IMR-90 (cell line): ENCODE measurements at regions of chr7 and their contacts with region 1.

Region 1: GRCh38 chr7:124171068-124171467 is 138.2 kb upstream of the TMEM229A start:
- DNase-seq: peak; percentile 62
- ATAC-seq: peak; percentile 77
- H3K4me3 ChIP-seq: no peak overlapping the region
- H3K27ac ChIP-seq: peak overlapping the region; percentile 55; the same call in 1 of the 2 replicates
- H3K4me1 ChIP-seq: peaks cover 2% of the 10 kb centered on the region; the same call in 1 of the 2 replicates
- H3K27me3 ChIP-seq: no peaks in the 10 kb centered on the region
- CTCF ChIP-seq: peak; percentile 79
- POLR2A ChIP-seq: no peak
- RAD21 ChIP-seq: peak; percentile 80

Region 2: DNA sequence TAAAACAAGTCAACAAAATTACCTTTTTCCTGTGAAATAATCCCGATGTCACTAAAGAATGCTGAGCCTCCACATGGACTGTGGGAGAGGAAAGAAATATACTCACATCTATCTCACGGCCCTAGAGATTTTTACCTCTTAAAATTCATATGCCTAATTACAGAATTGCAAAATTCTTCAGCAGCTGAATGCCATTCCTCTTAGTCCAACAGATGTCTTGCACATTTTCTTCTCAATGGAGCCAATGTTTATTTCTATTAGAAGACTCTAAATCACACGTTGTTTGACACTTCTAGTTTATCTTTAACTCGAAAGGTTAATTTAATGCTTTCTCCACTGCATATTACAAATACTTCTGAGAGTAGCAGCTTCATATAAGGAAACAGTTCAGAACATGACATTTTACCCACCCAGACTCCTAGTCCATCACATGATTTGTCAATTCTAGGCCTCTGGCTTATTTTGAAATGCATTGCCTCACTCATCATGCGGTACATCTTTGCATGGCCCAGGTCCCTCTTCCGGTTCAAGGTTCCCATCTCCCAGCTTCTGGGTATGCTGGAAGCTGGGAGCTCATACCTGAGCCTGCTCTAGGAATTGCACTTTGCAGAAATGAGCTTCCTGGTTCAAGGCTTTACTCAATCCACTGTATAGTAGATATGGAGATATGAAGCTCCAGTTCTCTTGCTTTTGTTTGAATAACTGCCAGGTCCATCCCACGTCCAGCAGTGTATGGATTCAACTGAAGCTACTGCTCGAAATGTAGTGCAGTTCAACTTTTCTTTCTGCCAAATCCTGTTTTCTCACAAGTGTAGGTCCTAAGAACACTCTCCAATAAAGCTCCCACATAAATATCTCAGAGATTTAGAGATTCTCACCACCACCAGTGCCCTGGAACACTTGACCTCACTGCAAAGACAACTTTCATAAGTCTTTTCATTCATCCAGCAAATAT is 288.3 kb after region 1 on chr7:
- CTCF ChIA-PET with region 1: interaction called, 3 read pairs
- POLR2A ChIA-PET with region 1: no interaction called
- dilution Hi-C with region 1: no loop called
- in situ Hi-C with region 1: no loop called
- intact Hi-C with region 1: loop called (anchors 2 kb)
- DNase-seq: peak; percentile 87
- ATAC-seq: peak; percentile 76
- H3K4me3 ChIP-seq: no peak overlapping the region
- H3K27ac ChIP-seq: peak overlapping the region; percentile 86
- H3K4me1 ChIP-seq: peaks cover 13% of the 10 kb centered on the region
- H3K27me3 ChIP-seq: no peaks in the 10 kb centered on the region
- CTCF ChIP-seq: no peak
- POLR2A ChIP-seq: no peak
- RAD21 ChIP-seq: no peak

Region 3: GRCh38 chr7:124536156-124536762 is 365.2 kb after region 1 on chr7:
- CTCF ChIA-PET with region 1: no interaction called
- POLR2A ChIA-PET with region 1: no interaction called
- dilution Hi-C with region 1: no loop called
- in situ Hi-C with region 1: no loop called
- intact Hi-C with region 1: loop called (anchors 10 kb)
- DNase-seq: peak; percentile 59
- ATAC-seq: peak; percentile 48
- H3K4me3 ChIP-seq: no peak overlapping the region
- H3K27ac ChIP-seq: 0 out of 2 replicates have a peak overlapping the region, but pooled peaks have one; percentile 41
- H3K4me1 ChIP-seq: peaks cover 7% of the 10 kb centered on the region
- H3K27me3 ChIP-seq: no peaks in the 10 kb centered on the region
- CTCF ChIP-seq: no peak
- POLR2A ChIP-seq: no peak
- RAD21 ChIP-seq: no peak

Region 4: GRCh38 chr7:124784879-124785818 is 614.1 kb after region 1 on chr7:
- CTCF ChIA-PET with region 1: interaction called, 5 read pairs
- POLR2A ChIA-PET with region 1: no interaction called
- dilution Hi-C with region 1: no loop called
- in situ Hi-C with region 1: no loop called
- intact Hi-C with region 1: loop called (anchors 1 kb)
- DNase-seq: peak; percentile 73
- ATAC-seq: peak; percentile 85
- H3K4me3 ChIP-seq: no peak overlapping the region
- H3K27ac ChIP-seq: no peak overlapping the region
- H3K4me1 ChIP-seq: peaks cover 2% of the 10 kb centered on the region; the same call in 1 of the 2 replicates
- H3K27me3 ChIP-seq: no peaks in the 10 kb centered on the region
- CTCF ChIP-seq: peak; percentile 95
- POLR2A ChIP-seq: 0 out of 2 replicates have a peak, but pooled peaks have one; percentile 43
- RAD21 ChIP-seq: peak; percentile 97

Region 5: GRCh38 chr7:124918662-124919061 is 747.6 kb after region 1 on chr7:
- CTCF ChIA-PET with region 1: no interaction called
- POLR2A ChIA-PET with region 1: no interaction called
- dilution Hi-C with region 1: no loop called
- in situ Hi-C with region 1: no loop called
- intact Hi-C with region 1: no loop called
- DNase-seq: peak; percentile 2
- ATAC-seq: no peak
- H3K4me3 ChIP-seq: no peak overlapping the region
- H3K27ac ChIP-seq: no peak overlapping the region
- H3K4me1 ChIP-seq: no peaks in the 10 kb centered on the region
- H3K27me3 ChIP-seq: no peaks in the 10 kb centered on the region
- CTCF ChIP-seq: no peak
- POLR2A ChIP-seq: no peak
- RAD21 ChIP-seq: no peak

Region 6: GRCh38 chr7:125412890-125413665 is 1242.0 kb after region 1 on chr7:
- CTCF ChIA-PET with region 1: no interaction called
- POLR2A ChIA-PET with region 1: no interaction called
- dilution Hi-C with region 1: no loop called
- in situ Hi-C with region 1: no loop called
- intact Hi-C with region 1: no loop called
- DNase-seq: no peak
- ATAC-seq: no peak
- H3K4me3 ChIP-seq: no peak overlapping the region
- H3K27ac ChIP-seq: no peak overlapping the region
- H3K4me1 ChIP-seq: no peaks in the 10 kb centered on the region
- H3K27me3 ChIP-seq: no peaks in the 10 kb centered on the region
- CTCF ChIP-seq: no peak
- POLR2A ChIP-seq: no peak
- RAD21 ChIP-seq: no peak